CD8-positive, alpha-beta T cell (primary cell): ENCODE measurements at regions of chr9 and their contacts with region 1.

Region 1: GRCh38 chr9:99184475-99185347 is 37.0 kb downstream of the ALG2 start:
- DNase-seq: peak; percentile 56 to 90 (median 80)
- ATAC-seq: peak; percentile 96
- H3K4me3 ChIP-seq: peak overlapping the region in 1 of 2 experiments; percentile 18
- H3K4me3 Mint-ChIP-seq: peak overlapping the region; percentile 41
- H3K27ac ChIP-seq: no peak overlapping the region
- H3K27ac Mint-ChIP-seq: peak overlapping the region; percentile 29
- H3K4me1 ChIP-seq: peaks cover 6% of the 10 kb centered on the region
- H3K4me1 Mint-ChIP-seq: peaks cover 15% of the 10 kb centered on the region
- H3K27me3 ChIP-seq: no peaks in the 10 kb centered on the region
- H3K27me3 Mint-ChIP-seq: no peaks in the 10 kb centered on the region
- CTCF ChIP-seq: peak; percentile 89

Region 2: DNA sequence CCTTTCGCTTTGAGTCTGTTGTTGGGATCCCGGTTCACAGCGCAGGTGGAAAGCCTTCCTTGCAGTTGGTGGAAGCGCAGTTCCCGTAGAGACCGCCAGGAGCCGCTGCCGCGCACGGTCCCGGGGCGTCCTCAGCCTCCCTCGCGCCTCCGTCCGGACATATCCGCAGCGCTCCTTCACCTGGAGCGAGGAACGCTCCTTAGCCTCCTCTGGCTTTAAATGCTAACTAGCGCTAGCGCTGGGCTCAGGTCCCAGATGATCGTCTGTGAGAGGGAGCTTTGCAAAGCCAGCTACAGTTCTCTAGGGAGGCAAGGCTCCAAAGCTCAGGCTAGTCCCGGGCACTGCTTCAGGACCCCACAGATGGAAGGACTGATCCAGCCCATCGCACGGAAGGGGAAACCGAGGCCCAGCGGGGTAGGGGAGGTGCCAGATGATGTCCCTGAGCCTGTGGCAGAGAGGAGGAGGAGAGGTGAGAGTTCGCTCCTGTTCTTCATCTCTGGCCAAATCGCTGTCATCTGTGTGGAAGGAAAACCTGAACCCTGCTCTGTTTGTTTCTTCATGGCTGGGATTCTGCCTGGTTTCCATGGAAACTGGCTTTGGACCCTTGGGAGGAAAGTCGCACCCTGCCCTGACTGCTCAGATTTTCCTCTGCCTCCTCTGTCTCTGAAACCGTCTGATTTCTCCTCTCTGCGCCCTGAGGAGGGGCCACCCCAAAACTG is 209.6 kb before region 1 on chr9:
- CTCF ChIA-PET with region 1: interaction called, 15 read pairs
- POLR2A ChIA-PET with region 1: no interaction called
- intact Hi-C with region 1: no loop called
- DNase-seq: peak; percentile 66 to 88 (median 81)
- ATAC-seq: peak; percentile 99
- H3K4me3 ChIP-seq: peak overlapping the region; percentile 33
- H3K4me3 Mint-ChIP-seq: peak overlapping the region; percentile 67
- H3K27ac ChIP-seq: no peak overlapping the region
- H3K27ac Mint-ChIP-seq: no peak overlapping the region
- H3K4me1 ChIP-seq: peaks cover 18% of the 10 kb centered on the region
- H3K4me1 Mint-ChIP-seq: peaks cover 6% of the 10 kb centered on the region
- H3K27me3 ChIP-seq: peaks cover 0 to 7% of the 10 kb centered on the region in 2 experiments
- H3K27me3 Mint-ChIP-seq: peaks cover 7% of the 10 kb centered on the region
- CTCF ChIP-seq: peak; percentile 97

Region 3: GRCh38 chr9:99162759-99163364 is 21.8 kb before region 1 on chr9:
- CTCF ChIA-PET with region 1: interaction called, 58 read pairs
- POLR2A ChIA-PET with region 1: no interaction called
- intact Hi-C with region 1: loop called (anchors 2 kb)
- DNase-seq: peak in 2 of 9 experiments; percentile 56 to 71
- ATAC-seq: no peak
- H3K4me3 ChIP-seq: no peak overlapping the region
- H3K4me3 Mint-ChIP-seq: no peak overlapping the region
- H3K27ac ChIP-seq: no peak overlapping the region
- H3K27ac Mint-ChIP-seq: no peak overlapping the region
- H3K4me1 ChIP-seq: peaks cover 14% of the 10 kb centered on the region
- H3K4me1 Mint-ChIP-seq: peaks cover 26% of the 10 kb centered on the region
- H3K27me3 ChIP-seq: no peaks in the 10 kb centered on the region
- H3K27me3 Mint-ChIP-seq: no peaks in the 10 kb centered on the region
- CTCF ChIP-seq: peak; percentile 86

Region 4: DNA sequence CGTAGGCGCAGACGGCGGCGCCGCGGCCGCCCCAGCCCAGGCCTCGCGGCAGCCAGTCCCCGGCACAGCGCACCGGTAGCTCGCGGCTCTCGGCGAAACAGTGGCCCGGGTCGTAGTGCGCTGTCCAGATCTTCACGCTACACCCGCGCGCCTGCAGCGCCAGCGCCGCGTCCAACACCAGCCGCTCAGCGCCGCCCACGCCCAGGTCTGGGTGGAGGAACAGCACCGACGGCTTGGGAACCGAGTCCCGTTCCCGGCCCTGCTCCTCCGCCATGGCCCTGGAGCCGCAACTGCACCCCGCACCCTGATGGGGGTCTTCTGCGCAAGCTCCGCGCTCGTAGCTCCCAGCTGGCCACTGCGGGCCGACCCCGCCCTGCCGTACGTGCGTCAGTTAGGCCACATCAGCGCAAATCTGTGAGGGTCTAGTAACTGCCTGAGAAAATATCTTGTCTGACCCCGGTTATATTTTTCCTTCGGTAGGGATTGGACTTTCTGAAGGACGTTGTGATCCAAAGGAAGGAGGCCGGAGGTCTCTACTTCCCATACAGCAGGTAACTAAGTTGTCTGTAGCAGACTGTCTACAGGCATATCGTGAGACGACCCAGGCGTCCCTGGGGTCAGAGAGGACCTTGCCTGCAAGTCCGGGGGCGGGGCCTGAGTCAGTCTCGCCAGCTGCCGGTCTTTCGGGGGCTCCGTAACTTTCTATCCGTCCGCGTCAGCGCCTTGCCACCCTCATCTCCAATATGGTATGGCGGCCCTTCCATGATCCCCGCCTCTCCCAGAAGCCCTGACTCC is 37.1 kb after region 1 on chr9 and contains the starts of genes ALG2 and SEC61B:
- CTCF ChIA-PET with region 1: interaction called, 5 read pairs
- POLR2A ChIA-PET with region 1: interaction called, 8 read pairs
- intact Hi-C with region 1: loop called in 1 of 2 experiments (anchors 5 kb)
- DNase-seq: peak; percentile 87 to 96 (median 94)
- ATAC-seq: peak; percentile 88
- H3K4me3 ChIP-seq: peak within 1 kb of the TSS; percentile 79 to 90
- H3K4me3 Mint-ChIP-seq: peak within 1 kb of the TSS; percentile 99
- H3K27ac ChIP-seq: peak within 1 kb of the TSS; percentile 95 to 99
- H3K27ac Mint-ChIP-seq: peak within 1 kb of the TSS; percentile 100
- H3K4me1 ChIP-seq: peaks cover 30% of the 10 kb centered on the region
- H3K4me1 Mint-ChIP-seq: peaks cover 80% of the 10 kb centered on the region
- H3K27me3 ChIP-seq: no peaks in the 10 kb centered on the region
- H3K27me3 Mint-ChIP-seq: no peaks in the 10 kb centered on the region
- CTCF ChIP-seq: no peak
- total RNA-seq, gene ALG2: 21.0 to 24.7 TPM
- total RNA-seq, gene SEC61B: 107 to 108 TPM

Region 5: GRCh38 chr9:99465231-99465907 is 280.7 kb after region 1 on chr9:
- CTCF ChIA-PET with region 1: no interaction called
- POLR2A ChIA-PET with region 1: no interaction called
- intact Hi-C with region 1: no loop called
- DNase-seq: no peak
- ATAC-seq: no peak
- H3K4me3 ChIP-seq: no peak overlapping the region
- H3K4me3 Mint-ChIP-seq: no peak overlapping the region
- H3K27ac ChIP-seq: no peak overlapping the region
- H3K27ac Mint-ChIP-seq: no peak overlapping the region
- H3K4me1 ChIP-seq: no peaks in the 10 kb centered on the region
- H3K4me1 Mint-ChIP-seq: no peaks in the 10 kb centered on the region
- H3K27me3 ChIP-seq: no peaks in the 10 kb centered on the region
- H3K27me3 Mint-ChIP-seq: peaks cover 5% of the 10 kb centered on the region
- CTCF ChIP-seq: no peak

Region 6: GRCh38 chr9:100322954-100323536 is 1138.3 kb after region 1 on chr9:
- CTCF ChIA-PET with region 1: interaction called, 4 read pairs
- POLR2A ChIA-PET with region 1: no interaction called
- intact Hi-C with region 1: loop called (anchors 1 to 2 kb)
- DNase-seq: peak in 4 of 9 experiments; percentile 11 to 48 (median 30)
- ATAC-seq: no peak
- H3K4me3 ChIP-seq: no peak overlapping the region
- H3K4me3 Mint-ChIP-seq: no peak overlapping the region
- H3K27ac ChIP-seq: no peak overlapping the region
- H3K27ac Mint-ChIP-seq: no peak overlapping the region
- H3K4me1 ChIP-seq: no peaks in the 10 kb centered on the region
- H3K4me1 Mint-ChIP-seq: peaks cover 14% of the 10 kb centered on the region
- H3K27me3 ChIP-seq: no peaks in the 10 kb centered on the region
- H3K27me3 Mint-ChIP-seq: no peaks in the 10 kb centered on the region
- CTCF ChIP-seq: peak; percentile 39